PC-3 (cell line): ENCODE measurements at regions of chr17 and their contacts with region 1.

Region 1: GRCh38 chr17:78186692-78187595 is at the starts of genes AFMID and TK1:
- DNase-seq: peak; percentile 100
- ATAC-seq: peak; percentile 90
- H3K4me3 ChIP-seq: peak within 1 kb of the TSS; percentile 77
- H3K27ac ChIP-seq: peak within 1 kb of the TSS; percentile 45
- H3K4me1 ChIP-seq: peaks cover 24% of the 10 kb centered on the region
- H3K27me3 ChIP-seq: no peaks in the 10 kb centered on the region
- CTCF ChIP-seq: peak; percentile 76
- total RNA-seq, gene AFMID: 53.1 and 58.9 TPM in 2 replicates
- total RNA-seq, gene TK1: 340 and 430 TPM in 2 replicates

Region 2: GRCh38 chr17:77542551-77543490 is 644.1 kb before region 1 on chr17:
- CTCF ChIA-PET with region 1: interaction called, 14 read pairs
- POLR2A ChIA-PET with region 1: no interaction called
- intact Hi-C with region 1: no loop called
- DNase-seq: peak; percentile 91
- ATAC-seq: peak; percentile 96
- H3K4me3 ChIP-seq: no peak overlapping the region
- H3K27ac ChIP-seq: no peak overlapping the region
- H3K4me1 ChIP-seq: no peaks in the 10 kb centered on the region; the same call in 1 of the 2 replicates
- H3K27me3 ChIP-seq: peaks cover 60% of the 10 kb centered on the region
- CTCF ChIP-seq: peak; percentile 98

Region 3: GRCh38 chr17:78019367-78019975 is 167.5 kb before region 1 on chr17:
- CTCF ChIA-PET with region 1: interaction called, 12 read pairs
- POLR2A ChIA-PET with region 1: no interaction called
- intact Hi-C with region 1: no loop called
- DNase-seq: peak; percentile 73
- ATAC-seq: peak; percentile 59; the same call in 1 of the 2 replicates
- H3K4me3 ChIP-seq: no peak overlapping the region
- H3K27ac ChIP-seq: no peak overlapping the region
- H3K4me1 ChIP-seq: no peaks in the 10 kb centered on the region
- H3K27me3 ChIP-seq: 0 out of 2 replicates have a peak, but pooled peaks cover 3% of the 10 kb centered on the region
- CTCF ChIP-seq: peak; percentile 80

Region 4: DNA sequence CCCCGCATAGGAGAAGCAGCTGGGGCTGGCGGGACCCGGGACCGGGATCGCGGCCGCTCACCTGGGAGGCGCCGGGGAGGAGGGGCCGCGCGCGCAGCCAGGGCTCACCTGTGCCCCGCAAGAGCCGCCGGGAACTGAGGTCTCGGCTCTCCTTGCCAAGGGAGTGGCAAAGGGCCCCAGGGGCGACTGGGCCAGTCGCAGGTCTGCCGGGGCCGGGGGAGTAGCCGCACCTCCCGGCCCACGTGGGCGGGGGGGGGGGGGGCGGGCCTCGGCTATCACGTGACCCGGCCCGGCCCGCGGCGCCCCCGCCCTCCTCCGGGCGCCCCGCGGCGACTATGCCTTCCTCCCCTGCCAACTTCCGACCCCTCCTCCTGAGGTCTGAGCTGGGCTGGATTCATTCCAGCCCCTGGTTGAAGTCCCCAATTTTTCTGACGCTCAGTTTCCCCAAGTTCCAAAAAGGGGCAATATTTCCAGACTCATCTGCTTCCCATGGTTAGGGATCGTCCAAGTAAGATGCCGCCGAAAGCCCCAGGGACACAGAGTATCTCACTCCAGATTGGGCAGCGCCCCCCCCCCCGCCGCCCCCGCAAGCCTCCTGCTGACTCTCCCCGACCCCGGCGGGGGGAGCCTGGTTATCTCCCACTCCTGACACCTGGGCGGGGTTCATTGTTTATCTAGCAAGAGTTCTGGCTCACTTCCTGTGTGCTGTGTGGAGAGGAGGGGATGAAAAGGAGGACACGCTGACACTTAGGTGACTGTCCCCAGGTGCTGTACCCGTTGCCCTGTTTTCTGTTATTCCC is 58.2 kb before region 1 on chr17 and contains the start of gene TMC6:
- CTCF ChIA-PET with region 1: no interaction called
- POLR2A ChIA-PET with region 1: no interaction called
- intact Hi-C with region 1: loop called (anchors 2 kb)
- DNase-seq: peak; percentile 90
- ATAC-seq: peak; percentile 61
- H3K4me3 ChIP-seq: peak within 1 kb of the TSS; percentile 95
- H3K27ac ChIP-seq: peak within 1 kb of the TSS; percentile 79
- H3K4me1 ChIP-seq: peaks cover 27% of the 10 kb centered on the region
- H3K27me3 ChIP-seq: no peaks in the 10 kb centered on the region
- CTCF ChIP-seq: no peak
- total RNA-seq, gene TMC6: 97.3 and 138 TPM in 2 replicates

Region 5: GRCh38 chr17:78168242-78168902 is 18.6 kb before region 1 on chr17 and contains the start of gene SYNGR2:
- CTCF ChIA-PET with region 1: no interaction called
- POLR2A ChIA-PET with region 1: interaction called, 3 read pairs
- intact Hi-C with region 1: loop called (anchors 1 kb)
- DNase-seq: peak; percentile 94
- ATAC-seq: peak; percentile 67
- H3K4me3 ChIP-seq: peak within 1 kb of the TSS; percentile 76
- H3K27ac ChIP-seq: peak within 1 kb of the TSS; percentile 48
- H3K4me1 ChIP-seq: peaks cover 20% of the 10 kb centered on the region
- H3K27me3 ChIP-seq: no peaks in the 10 kb centered on the region
- CTCF ChIP-seq: no peak
- total RNA-seq, gene SYNGR2: 213 and 220 TPM in 2 replicates

Region 6: GRCh38 chr17:78214706-78215061 is 27.7 kb after region 1 on chr17:
- CTCF ChIA-PET with region 1: no interaction called
- POLR2A ChIA-PET with region 1: no interaction called
- intact Hi-C with region 1: loop called (anchors 1 kb)
- DNase-seq: no peak
- ATAC-seq: peak; percentile 17
- H3K4me3 ChIP-seq: peak overlapping the region; percentile 100
- H3K27ac ChIP-seq: peak overlapping the region; percentile 72
- H3K4me1 ChIP-seq: peaks cover 13% of the 10 kb centered on the region
- H3K27me3 ChIP-seq: no peaks in the 10 kb centered on the region
- CTCF ChIP-seq: no peak

Region 7: DNA sequence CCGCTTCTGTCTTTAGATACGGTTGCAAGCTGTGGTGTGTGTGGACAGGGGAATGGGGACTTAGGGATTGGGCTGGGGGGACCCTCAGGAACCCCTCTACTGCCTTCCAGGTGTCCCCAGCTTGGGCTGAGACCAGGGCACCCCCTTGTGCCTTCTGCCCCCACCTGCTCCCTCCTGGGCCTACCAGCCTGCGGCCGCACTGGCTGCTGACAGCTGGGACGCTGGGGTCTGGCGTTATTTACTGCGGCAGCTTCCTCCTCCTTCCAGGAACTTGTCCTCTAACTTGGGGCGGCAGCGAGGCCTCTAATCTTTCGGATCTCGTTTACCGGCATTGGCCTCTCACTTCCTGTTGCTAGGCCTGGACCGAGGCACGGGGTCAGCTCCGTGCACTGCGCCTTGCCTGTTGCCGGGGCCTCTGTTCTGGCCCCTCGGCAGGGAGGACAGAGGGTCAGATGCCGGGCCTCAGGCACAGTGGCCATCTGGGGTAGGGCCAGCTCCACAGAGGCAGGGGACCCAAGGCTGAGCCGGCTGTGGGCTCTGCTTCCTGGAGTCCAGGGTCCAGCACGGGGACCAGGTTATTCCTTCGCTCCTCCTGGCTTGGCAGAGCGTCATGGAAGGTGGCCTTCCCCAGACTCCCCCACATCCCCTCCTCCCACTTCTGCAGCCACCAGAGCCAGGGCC is 76.3 kb after region 1 on chr17:
- CTCF ChIA-PET with region 1: no interaction called
- POLR2A ChIA-PET with region 1: no interaction called
- intact Hi-C with region 1: no loop called
- DNase-seq: no peak
- ATAC-seq: no peak
- H3K4me3 ChIP-seq: no peak overlapping the region
- H3K27ac ChIP-seq: no peak overlapping the region
- H3K4me1 ChIP-seq: no peaks in the 10 kb centered on the region
- H3K27me3 ChIP-seq: no peaks in the 10 kb centered on the region
- CTCF ChIP-seq: no peak